ENCODE measurements at regions of chr2 and their contacts with region 1.

Region 1: DNA sequence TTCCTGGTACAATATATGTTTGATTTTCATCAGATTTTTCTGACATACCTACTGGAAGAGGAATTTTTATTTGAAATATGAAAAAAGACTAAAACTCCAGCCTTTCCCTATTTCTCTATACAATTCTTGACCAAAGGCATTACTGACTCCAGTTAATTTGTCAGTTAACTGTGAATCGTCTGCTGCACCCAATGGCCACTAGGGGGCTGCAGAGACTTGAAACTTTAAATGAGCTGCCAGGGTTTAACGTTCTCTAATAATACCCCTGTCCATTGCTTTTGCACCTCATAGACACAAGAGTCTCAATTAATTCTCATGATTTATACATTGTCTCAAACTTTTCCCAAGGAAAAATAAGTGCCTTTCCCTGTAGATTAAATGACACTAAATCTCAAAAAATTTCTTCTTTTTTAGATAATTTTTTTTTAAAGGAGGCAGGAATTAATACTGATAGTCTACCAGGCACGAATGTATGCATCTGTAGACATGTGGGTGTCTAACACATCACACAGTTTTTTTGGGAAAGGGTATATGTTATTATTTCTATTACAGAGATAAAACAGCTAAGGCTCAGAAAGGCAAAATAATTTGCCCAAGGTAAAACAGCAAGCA is 1.8 kb upstream of the ALK start:
- DNase-seq: peak; percentile 5
- H3K4me3 ChIP-seq: no peak overlapping the region
- CTCF ChIP-seq: peak; percentile 74

Region 2: DNA sequence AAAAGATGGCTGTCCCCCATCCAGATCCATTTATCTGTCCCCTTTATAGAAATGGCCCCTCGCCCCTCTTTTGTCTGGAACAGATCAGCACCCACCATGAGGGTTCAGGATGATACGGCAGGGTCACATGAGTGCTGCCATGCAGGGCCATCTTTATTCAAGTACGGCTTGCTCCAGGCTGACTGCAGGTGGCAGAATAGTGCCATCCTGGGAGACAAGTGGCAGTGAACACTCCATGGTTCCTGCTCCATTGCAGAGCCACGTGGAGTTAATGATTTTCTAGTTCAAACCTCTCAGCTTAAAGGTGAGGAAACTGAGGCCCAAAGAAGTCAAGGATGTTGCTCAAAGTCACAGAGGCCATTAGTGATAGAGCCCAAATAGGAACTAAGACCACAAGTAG is 627.4 kb before region 1 on chr2:
- CTCF ChIA-PET with region 1: interaction called, 17 read pairs
- POLR2A ChIA-PET with region 1: no interaction called
- DNase-seq: no peak
- H3K4me3 ChIP-seq: no peak overlapping the region
- CTCF ChIP-seq: peak; percentile 41

Region 3: GRCh38 chr2:29351916-29352591 is 571.2 kb before region 1 on chr2:
- CTCF ChIA-PET with region 1: no interaction called
- POLR2A ChIA-PET with region 1: no interaction called
- DNase-seq: no peak
- H3K4me3 ChIP-seq: no peak overlapping the region
- CTCF ChIP-seq: no peak

Region 4: DNA sequence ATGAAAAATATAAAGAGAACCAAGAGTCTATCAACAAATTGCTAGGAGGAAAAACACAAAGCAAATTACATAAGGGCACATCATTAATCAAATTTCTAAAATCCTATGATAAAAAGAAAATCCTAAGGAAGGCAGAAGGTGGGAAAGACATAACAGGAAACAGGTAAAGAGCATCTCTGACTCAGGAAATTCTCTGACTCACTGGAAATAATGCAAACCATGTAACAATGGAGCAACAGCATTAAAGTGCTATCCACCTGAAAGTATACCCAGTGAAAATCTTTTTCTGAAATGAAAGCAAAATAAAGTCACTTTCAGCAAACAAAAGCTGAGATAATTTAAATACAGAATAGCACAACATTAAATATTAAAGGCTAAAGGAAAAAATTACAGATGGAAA is 12.8 kb before region 1 on chr2:
- CTCF ChIA-PET with region 1: interaction called, 39 read pairs
- POLR2A ChIA-PET with region 1: no interaction called
- DNase-seq: no peak
- H3K4me3 ChIP-seq: no peak overlapping the region
- CTCF ChIP-seq: no peak

Region 5: GRCh38 chr2:29936020-29936419 is 12.8 kb after region 1 on chr2:
- CTCF ChIA-PET with region 1: interaction called, 61 read pairs
- POLR2A ChIA-PET with region 1: no interaction called
- DNase-seq: no peak
- H3K4me3 ChIP-seq: no peak overlapping the region
- CTCF ChIP-seq: no peak

Region 6: DNA sequence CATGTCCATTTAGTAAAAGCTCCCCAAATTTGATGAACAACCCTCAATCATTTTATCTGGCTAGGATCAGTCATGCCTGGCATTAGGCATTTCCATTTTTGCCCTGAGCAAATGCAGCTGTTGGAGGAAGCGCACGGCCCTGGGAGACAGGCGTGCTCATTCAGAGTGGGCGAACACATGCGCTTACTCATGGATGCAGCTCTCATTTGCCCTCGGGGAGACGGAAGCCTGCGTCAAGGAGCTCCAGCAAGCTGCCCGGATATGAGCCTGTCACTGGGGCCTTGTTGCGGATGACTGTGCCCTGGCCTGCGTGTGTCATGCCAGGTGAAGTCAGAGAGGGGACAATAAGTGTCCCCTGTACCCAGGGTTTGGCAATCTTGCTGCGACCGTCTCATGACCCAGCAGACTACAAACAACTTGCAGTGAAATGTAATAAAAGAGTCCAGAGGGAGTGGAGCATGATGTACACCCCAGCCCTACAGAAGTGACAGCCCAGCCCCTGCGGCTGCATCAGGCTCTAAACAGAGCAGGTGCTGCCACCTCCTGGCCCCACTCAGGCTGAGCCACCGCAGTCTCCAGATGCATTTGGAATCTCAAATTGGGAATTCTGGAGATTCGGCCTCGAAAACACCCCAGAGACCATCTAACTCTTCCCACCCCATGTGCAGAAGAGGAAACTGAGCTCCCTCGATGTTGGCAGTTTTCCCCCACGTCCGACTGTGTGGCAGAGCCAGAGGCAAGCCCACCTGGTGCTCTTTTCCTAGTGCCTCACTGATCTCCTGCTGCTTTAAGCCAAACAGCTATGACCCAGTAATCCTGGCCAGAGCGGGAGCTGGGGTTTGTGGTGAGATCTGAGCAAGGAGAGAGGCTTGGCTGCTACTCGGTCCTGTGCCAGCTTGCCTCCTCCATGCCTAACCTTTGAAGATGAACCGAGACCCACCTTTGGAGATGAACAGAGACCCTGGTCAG is 103.2 kb after region 1 on chr2:
- CTCF ChIA-PET with region 1: interaction called, 30 read pairs
- POLR2A ChIA-PET with region 1: no interaction called
- DNase-seq: peak; percentile 26
- H3K4me3 ChIP-seq: no peak overlapping the region
- CTCF ChIP-seq: peak; percentile 75

Region 7: GRCh38 chr2:30072250-30072842 is 149.1 kb after region 1 on chr2:
- CTCF ChIA-PET with region 1: interaction called, 46 read pairs
- POLR2A ChIA-PET with region 1: no interaction called
- DNase-seq: no peak
- H3K4me3 ChIP-seq: no peak overlapping the region
- CTCF ChIP-seq: peak; percentile 85

Measured in AG04449 (cell line).